ENCODE measurements at regions of chr4 and their contacts with region 1.

Region 1: DNA sequence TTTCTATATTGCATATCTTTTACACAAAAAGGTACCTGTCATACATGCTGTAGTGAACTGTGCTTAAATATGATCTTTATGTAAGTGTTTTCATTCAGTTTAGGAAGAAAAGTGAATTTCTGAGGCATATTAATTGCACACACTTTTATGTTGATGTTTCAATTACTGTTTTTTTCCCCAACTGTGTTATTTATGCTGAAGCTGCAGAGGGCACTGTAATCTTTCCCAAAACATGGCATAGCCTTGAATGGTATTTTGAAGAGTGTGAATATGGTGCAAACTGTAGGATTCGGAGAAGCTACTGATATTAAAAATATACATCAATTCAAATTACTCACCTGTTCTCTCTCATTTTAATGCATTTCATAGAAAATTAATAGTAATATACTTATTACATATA is 6.0 kb upstream of the CENPE start:
- DNase-seq: peak; percentile 48
- H3K4me3 ChIP-seq: no peak overlapping the region
- H3K27ac ChIP-seq: no peak overlapping the region
- H3K4me1 ChIP-seq: no peaks in the 10 kb centered on the region
- H3K27me3 ChIP-seq: no peaks in the 10 kb centered on the region

Region 2: DNA sequence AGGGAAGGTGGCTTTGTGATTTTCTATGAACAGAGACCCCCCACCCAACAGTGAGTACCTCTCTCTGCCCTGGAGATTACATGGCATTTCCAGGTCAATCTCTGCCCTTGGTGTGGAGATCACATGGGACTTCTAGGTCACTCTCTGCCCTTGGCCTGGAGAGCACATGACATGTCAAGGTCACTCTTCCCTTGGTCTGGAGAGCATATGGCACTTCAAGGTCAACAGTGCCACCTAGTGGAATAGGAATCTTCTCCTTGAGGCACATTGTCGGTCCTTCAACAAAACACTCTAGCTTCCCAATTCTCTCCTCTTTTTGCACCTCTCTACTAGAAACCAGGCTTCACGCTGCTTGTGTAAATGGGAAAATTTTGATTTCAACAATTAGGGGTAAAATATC is 581.9 kb after region 1 on chr4:
- in situ Hi-C with region 1: loop called (anchors 10 kb)
- DNase-seq: peak; percentile 69
- H3K4me3 ChIP-seq: no peak overlapping the region
- H3K27ac ChIP-seq: no peak overlapping the region
- H3K4me1 ChIP-seq: no peaks in the 10 kb centered on the region
- H3K27me3 ChIP-seq: no peaks in the 10 kb centered on the region

Region 3: GRCh38 chr4:103928370-103928769 is 724.3 kb after region 1 on chr4:
- in situ Hi-C with region 1: loop called (anchors 10 kb)
- DNase-seq: no peak
- H3K4me3 ChIP-seq: no peak overlapping the region
- H3K27ac ChIP-seq: no peak overlapping the region
- H3K4me1 ChIP-seq: no peaks in the 10 kb centered on the region
- H3K27me3 ChIP-seq: no peaks in the 10 kb centered on the region

Measured in GM23248 (cell line).